Activated T-helper 1 cell treated with anti-CD3 and anti-CD28 coated beads, Interleukin-12 subunit alpha, Interleukin-12 subunit beta, Interleukin-2, Interleukin-4 antibody, amounts not matched to agents 30 ng/mL and 10 ng/mL and 1 ng/mL, durations not matched to agents 14 hours and 24 hours and 36 hours (primary cell): ENCODE measurements at regions of chr6 and their contacts with region 1.

Region 1: DNA sequence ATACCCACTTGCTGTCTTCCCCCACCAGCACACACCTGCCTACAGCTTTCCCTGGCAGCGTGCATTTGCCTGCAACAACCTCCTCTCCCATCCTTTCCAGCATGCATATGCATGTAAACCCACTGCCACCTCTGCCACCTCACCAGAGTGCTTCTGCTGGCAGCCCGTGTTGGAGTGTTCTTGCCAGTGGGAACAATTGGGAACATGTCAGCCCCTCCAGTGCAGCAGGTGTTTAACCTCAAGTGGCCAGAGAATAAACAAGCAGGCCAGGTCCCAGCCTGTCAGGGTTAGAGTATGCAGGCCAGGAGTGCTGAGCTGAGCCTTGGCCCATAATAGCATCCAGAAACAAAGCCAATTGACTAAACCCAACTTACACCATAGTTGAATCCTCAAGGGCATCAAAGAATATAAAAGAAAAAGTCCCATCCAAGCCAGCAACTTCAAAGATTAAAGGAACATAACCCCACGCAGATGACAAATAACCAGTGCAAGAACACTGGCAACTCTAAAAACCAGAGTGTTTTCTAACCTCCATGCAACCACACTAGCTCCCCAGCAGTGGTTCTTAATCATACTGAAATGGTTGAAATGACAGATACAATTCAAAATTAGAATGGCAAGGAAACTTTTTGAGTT is 1212.1 kb upstream of the CITED2 start:
- DNase-seq: peak; percentile 46
- H3K4me3 Mint-ChIP-seq: peak overlapping the region; percentile 32
- H3K27ac Mint-ChIP-seq: peak overlapping the region; percentile 94
- H3K4me1 Mint-ChIP-seq: peaks cover 48% of the 10 kb centered on the region
- H3K27me3 Mint-ChIP-seq: peaks cover 2% of the 10 kb centered on the region

Region 2: DNA sequence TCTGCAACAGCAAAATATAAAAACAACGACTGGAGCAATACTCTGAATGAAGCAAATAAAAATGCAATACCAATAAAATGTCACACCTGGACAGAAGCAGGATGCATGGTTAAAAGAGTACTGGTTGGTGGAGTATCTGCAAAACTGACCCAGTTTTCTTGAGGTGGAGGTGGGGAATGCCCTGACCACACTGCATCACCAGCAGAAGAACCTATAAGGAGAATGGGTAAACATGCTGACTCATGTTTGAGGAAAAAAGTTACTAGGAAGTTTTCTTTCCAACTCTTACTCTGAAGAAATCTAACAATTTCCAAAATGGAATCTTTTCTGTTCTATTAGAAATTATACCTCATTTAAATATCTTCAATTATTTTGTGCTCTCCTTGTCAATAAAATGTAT is 1642.1 kb before region 1 on chr6:
- intact Hi-C with region 1: loop called (anchors 2 kb)
- DNase-seq: peak; percentile 21
- H3K4me3 Mint-ChIP-seq: peak overlapping the region; percentile 17
- H3K27ac Mint-ChIP-seq: peak overlapping the region; percentile 53
- H3K4me1 Mint-ChIP-seq: peaks cover 63% of the 10 kb centered on the region
- H3K27me3 Mint-ChIP-seq: no peaks in the 10 kb centered on the region

Region 3: DNA sequence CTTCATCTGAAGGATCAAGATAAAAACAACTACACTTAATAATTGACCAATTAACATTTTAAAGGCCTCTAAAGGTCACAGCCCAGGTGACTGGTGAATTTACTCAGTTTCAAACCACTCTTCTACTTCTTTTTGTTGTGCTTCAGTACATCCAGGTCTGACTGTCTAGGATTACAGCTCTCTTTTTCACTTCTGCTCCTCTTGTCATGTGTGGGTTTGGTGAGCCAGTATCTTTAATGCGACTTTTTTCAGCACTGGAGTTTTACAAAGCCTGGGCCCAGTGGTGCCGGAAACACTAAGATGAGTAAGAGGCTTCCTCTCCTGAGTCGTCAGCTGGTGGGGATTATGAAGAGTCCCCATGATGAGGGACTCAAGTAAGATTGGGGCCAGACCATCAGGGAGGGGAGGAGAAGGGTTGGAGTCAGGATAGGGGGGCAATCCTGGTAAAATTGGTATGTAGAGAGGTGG is 1424.7 kb before region 1 on chr6:
- intact Hi-C with region 1: loop called (anchors 5 kb)
- DNase-seq: peak; percentile 72
- H3K4me3 Mint-ChIP-seq: peak overlapping the region; percentile 68
- H3K27ac Mint-ChIP-seq: peak overlapping the region; percentile 97
- H3K4me1 Mint-ChIP-seq: peaks cover 71% of the 10 kb centered on the region
- H3K27me3 Mint-ChIP-seq: no peaks in the 10 kb centered on the region

Region 4: DNA sequence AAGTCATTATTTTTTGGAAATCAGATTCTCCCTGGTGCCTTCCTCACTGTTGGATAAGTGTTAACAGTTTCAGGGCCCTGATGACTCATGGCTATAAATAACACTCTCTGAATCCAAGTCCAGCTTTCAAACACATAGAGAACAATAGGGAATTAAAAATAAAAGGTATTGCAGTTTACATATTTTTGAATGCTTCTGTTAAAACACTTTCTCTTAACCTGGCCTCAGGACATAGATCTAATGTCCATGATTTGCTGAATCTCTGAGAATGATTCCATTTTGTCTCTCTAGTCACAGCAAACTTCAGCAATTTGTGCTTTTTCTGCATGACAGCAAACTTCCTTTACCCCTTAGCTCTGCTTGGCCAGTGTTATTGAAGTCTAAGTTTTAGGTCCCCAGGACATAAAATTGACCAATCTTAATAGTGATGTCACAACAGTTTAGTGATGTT is 19.7 kb before region 1 on chr6:
- intact Hi-C with region 1: loop called (anchors 1 kb)
- DNase-seq: no peak
- H3K4me3 Mint-ChIP-seq: no peak overlapping the region
- H3K27ac Mint-ChIP-seq: no peak overlapping the region
- H3K4me1 Mint-ChIP-seq: peaks cover 23% of the 10 kb centered on the region
- H3K27me3 Mint-ChIP-seq: peaks cover 4% of the 10 kb centered on the region

Region 5: GRCh38 chr6:140597181-140597580 is 10.6 kb after region 1 on chr6:
- intact Hi-C with region 1: loop called (anchors 1 kb)
- DNase-seq: no peak
- H3K4me3 Mint-ChIP-seq: peak overlapping the region; percentile 48
- H3K27ac Mint-ChIP-seq: no peak overlapping the region
- H3K4me1 Mint-ChIP-seq: peaks cover 16% of the 10 kb centered on the region
- H3K27me3 Mint-ChIP-seq: no peaks in the 10 kb centered on the region

Region 6: GRCh38 chr6:140627002-140627401 is 40.5 kb after region 1 on chr6:
- intact Hi-C with region 1: no loop called
- DNase-seq: no peak
- H3K4me3 Mint-ChIP-seq: no peak overlapping the region
- H3K27ac Mint-ChIP-seq: no peak overlapping the region
- H3K4me1 Mint-ChIP-seq: no peaks in the 10 kb centered on the region
- H3K27me3 Mint-ChIP-seq: no peaks in the 10 kb centered on the region

Region 7: GRCh38 chr6:140774080-140774505 is 187.5 kb after region 1 on chr6:
- intact Hi-C with region 1: loop called (anchors 1 kb)
- DNase-seq: peak; percentile 6
- H3K4me3 Mint-ChIP-seq: no peak overlapping the region
- H3K27ac Mint-ChIP-seq: no peak overlapping the region
- H3K4me1 Mint-ChIP-seq: peaks cover 23% of the 10 kb centered on the region
- H3K27me3 Mint-ChIP-seq: peaks cover 7% of the 10 kb centered on the region

Region 8: DNA sequence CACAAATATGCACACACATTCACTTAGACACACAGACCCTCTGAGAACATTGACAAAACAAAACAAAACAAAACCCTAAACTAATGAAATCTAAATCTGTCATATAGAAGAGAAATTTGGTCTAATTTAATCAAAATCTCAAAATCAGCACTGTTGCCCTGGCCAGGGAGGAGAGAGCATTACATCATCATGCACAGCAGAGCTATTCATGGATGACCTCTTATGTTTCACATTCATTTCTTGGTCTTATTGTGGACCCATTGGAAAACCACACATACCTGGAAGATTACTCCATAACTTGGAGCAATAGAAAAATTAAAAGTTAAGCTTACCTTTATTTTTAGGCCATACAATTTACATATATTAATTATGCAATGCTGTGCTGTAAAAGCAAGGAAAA is 322.6 kb after region 1 on chr6:
- intact Hi-C with region 1: no loop called
- DNase-seq: no peak
- H3K4me3 Mint-ChIP-seq: no peak overlapping the region
- H3K27ac Mint-ChIP-seq: no peak overlapping the region
- H3K4me1 Mint-ChIP-seq: no peaks in the 10 kb centered on the region
- H3K27me3 Mint-ChIP-seq: peaks cover 2% of the 10 kb centered on the region

Region 9: GRCh38 chr6:141483598-141484061 is 897.1 kb after region 1 on chr6:
- intact Hi-C with region 1: loop called (anchors 5 kb)
- DNase-seq: peak; percentile 51
- H3K4me3 Mint-ChIP-seq: peak overlapping the region; percentile 87
- H3K27ac Mint-ChIP-seq: peak overlapping the region; percentile 98
- H3K4me1 Mint-ChIP-seq: peaks cover 47% of the 10 kb centered on the region
- H3K27me3 Mint-ChIP-seq: no peaks in the 10 kb centered on the region